ENCODE measurements at regions of chr9 and their contacts with region 1.

Region 1: DNA sequence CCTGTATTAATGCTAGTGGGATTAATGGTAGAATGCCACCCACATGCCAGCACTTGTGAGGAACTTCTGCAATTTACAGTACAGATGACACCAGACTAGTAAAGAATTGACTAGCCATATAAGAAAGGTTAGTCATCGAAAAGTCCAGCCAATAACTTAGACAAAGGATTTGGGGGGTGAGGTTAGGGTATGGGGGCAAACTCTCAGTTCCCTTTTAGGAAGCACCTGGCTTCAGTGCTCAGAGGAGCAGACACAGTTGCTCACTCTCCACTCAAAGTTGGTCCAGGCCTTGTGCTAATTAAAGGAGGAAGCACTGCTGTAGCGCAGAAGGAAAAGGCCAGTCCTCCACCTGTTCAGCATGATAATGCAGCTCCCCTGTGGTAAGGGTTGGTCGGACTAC is 25.2 kb downstream of the TGFBR1 start:
- DNase-seq: peak; percentile 19
- H3K27ac ChIP-seq: no peak overlapping the region
- CTCF ChIP-seq: no peak

Region 2: GRCh38 chr9:98980291-98980690 is 149.8 kb before region 1 on chr9:
- CTCF ChIA-PET with region 1: no interaction called
- POLR2A ChIA-PET with region 1: no interaction called
- DNase-seq: no peak
- H3K27ac ChIP-seq: no peak overlapping the region
- CTCF ChIP-seq: no peak

Region 3: GRCh38 chr9:99140685-99141314 is 10.7 kb after region 1 on chr9:
- CTCF ChIA-PET with region 1: interaction called, 11 read pairs
- POLR2A ChIA-PET with region 1: no interaction called
- DNase-seq: peak; percentile 72
- H3K27ac ChIP-seq: no peak overlapping the region
- CTCF ChIP-seq: peak; percentile 98

Region 4: DNA sequence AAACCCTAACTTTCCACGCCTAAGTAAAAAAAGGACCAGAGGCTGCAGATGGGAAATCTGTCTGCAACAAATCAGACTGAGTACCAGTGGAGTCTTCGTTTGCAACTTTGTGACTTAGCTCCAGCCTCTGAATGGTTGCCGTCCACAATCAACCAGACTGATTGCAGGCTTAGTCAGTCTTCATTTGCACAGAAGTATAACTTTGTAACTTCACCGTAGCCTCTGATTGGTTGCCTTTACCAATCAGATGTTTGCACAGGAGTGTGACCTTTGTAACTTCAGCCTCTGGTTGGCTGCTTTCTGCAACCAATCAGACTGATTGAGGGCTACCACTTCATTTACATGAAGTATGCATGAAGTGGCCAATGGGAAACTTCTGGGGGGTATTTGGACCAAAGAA is 28.6 kb after region 1 on chr9:
- CTCF ChIA-PET with region 1: no interaction called
- POLR2A ChIA-PET with region 1: no interaction called
- DNase-seq: no peak
- H3K27ac ChIP-seq: no peak overlapping the region
- CTCF ChIP-seq: no peak

Region 5: GRCh38 chr9:99272836-99273235 is 142.8 kb after region 1 on chr9:
- CTCF ChIA-PET with region 1: no interaction called
- POLR2A ChIA-PET with region 1: no interaction called
- DNase-seq: no peak
- H3K27ac ChIP-seq: no peak overlapping the region
- CTCF ChIP-seq: no peak

Region 6: GRCh38 chr9:99998266-99998665 is 868.2 kb after region 1 on chr9:
- CTCF ChIA-PET with region 1: interaction called, 10 read pairs
- POLR2A ChIA-PET with region 1: no interaction called
- DNase-seq: no peak
- H3K27ac ChIP-seq: no peak overlapping the region
- CTCF ChIP-seq: no peak

Region 7: GRCh38 chr9:100268266-100268665 is 1138.2 kb after region 1 on chr9:
- CTCF ChIA-PET with region 1: interaction called, 11 read pairs
- POLR2A ChIA-PET with region 1: no interaction called
- DNase-seq: no peak
- H3K27ac ChIP-seq: no peak overlapping the region
- CTCF ChIP-seq: no peak

Measured in RWPE1 (cell line).